Activated CD8-positive, alpha-beta memory T cell treated with anti-CD3 and anti-CD28 coated beads, Interleukin-2, amount 10 ng/mL, durations not matched to agents 7 days and 5 days (primary cell): ENCODE measurements at regions of chr10 and their contacts with region 1.

Region 1: DNA sequence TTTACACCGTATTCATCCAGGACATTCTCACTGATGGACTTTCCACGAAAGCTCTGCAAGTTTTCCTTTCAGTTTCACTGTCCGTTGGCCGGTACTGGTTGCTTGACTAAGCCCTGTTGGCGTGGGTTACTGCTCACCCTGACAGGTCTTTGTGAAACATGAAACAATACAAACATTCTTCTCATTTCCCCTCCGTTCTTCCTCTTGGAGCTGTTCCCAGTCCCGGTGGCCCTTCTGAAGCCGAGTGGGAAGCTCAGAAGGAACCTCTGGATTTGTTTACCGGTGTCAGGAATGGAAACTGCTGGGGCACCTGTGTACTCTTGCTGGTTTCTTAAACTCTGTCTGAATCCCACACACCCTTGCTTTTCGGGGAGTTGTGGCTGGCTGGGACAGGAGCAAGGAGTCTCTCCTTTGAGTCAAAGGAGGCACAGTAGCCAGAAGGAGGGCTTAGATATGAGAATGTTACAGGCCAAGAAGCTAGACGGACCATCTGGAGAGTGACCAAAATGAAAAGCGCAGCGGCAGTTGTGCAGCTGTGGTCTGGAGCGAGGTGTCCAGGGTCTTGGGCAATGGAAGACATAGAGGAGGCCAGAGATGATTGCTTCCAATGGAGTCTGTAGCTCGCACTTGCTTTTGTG is 45.7 kb downstream of the LYZL2 start:
- DNase-seq: peak; percentile 62
- ATAC-seq: peak; percentile 79
- H3K4me3 Mint-ChIP-seq: peak overlapping the region; percentile 53
- H3K27ac Mint-ChIP-seq: peak overlapping the region; percentile 55
- H3K4me1 Mint-ChIP-seq: peaks cover 18% of the 10 kb centered on the region
- H3K27me3 Mint-ChIP-seq: peaks cover 10% of the 10 kb centered on the region

Region 2: GRCh38 chr10:30392564-30392990 is 191.3 kb before region 1 on chr10:
- CTCF ChIA-PET with region 1: interaction called, 56 read pairs
- DNase-seq: peak; percentile 84
- ATAC-seq: peak; percentile 100
- H3K4me3 Mint-ChIP-seq: peak overlapping the region; percentile 46
- H3K27ac Mint-ChIP-seq: no peak overlapping the region
- H3K4me1 Mint-ChIP-seq: peaks cover 10% of the 10 kb centered on the region
- H3K27me3 Mint-ChIP-seq: peaks cover 30% of the 10 kb centered on the region

Region 3: DNA sequence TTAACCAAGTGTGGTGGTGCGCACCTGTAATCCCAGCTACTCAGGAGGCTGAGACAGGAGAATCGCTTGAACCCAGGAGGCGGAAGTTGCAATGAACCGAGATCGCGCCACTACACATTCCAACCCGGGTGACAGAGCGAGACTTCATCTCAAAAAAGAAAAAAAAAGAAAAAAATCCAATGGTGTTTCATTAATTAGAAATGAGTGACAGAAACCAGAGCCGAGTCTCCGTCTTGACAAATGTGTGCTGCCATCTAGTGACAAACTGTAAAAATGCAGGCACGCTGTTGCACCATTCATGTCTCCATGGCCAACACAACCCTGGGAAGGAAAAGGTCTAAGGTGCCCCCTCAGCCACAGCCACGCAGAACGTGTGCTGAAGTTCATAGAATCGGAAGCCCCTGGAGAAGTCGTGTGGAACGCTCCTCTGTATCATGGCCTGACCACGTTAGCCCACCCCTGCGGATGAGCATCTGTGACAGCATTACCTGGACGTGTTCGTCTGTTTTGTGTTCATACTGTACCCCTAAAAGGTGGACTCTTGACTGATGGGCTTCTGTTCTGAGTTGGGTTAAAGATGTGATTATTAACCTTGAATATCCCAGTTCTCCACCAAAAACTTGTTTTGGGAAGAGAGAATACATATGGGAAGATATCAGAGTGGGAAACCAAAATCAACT is 49.3 kb before region 1 on chr10:
- CTCF ChIA-PET with region 1: interaction called, 11 read pairs
- DNase-seq: peak; percentile 86
- ATAC-seq: peak; percentile 47
- H3K4me3 Mint-ChIP-seq: no peak overlapping the region
- H3K27ac Mint-ChIP-seq: no peak overlapping the region
- H3K4me1 Mint-ChIP-seq: peaks cover 52% of the 10 kb centered on the region
- H3K27me3 Mint-ChIP-seq: no peaks in the 10 kb centered on the region

Region 4: GRCh38 chr10:30546511-30546910 is 37.4 kb before region 1 on chr10:
- CTCF ChIA-PET with region 1: interaction called, 11 read pairs
- DNase-seq: no peak
- ATAC-seq: no peak
- H3K4me3 Mint-ChIP-seq: no peak overlapping the region
- H3K27ac Mint-ChIP-seq: no peak overlapping the region
- H3K4me1 Mint-ChIP-seq: peaks cover 17% of the 10 kb centered on the region
- H3K27me3 Mint-ChIP-seq: peaks cover 6% of the 10 kb centered on the region

Region 5: GRCh38 chr10:30562787-30563186 is 21.1 kb before region 1 on chr10:
- CTCF ChIA-PET with region 1: interaction called, 26 read pairs
- DNase-seq: peak; percentile 86
- ATAC-seq: peak; percentile 95
- H3K4me3 Mint-ChIP-seq: no peak overlapping the region
- H3K27ac Mint-ChIP-seq: no peak overlapping the region
- H3K4me1 Mint-ChIP-seq: peaks cover 13% of the 10 kb centered on the region
- H3K27me3 Mint-ChIP-seq: peaks cover 33% of the 10 kb centered on the region

Region 6: DNA sequence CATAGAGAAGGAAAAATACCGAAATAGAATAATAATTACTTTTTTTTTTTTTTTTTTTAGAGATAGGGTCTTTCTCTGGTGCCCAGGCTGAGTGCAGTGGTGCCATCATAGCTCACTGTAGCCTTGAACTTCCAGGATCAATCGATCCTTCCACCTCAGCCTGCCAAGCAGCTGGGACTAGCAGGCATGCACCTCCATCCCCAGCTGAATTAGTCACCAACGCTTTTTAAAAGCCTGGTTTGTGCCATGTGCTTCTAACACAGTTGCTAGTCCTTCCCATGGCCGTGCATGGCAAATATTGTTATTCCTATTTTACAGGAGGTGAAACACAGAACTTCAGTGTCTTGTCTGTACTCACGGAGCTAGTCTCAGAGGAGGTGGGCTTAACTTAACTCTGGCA is 22.4 kb after region 1 on chr10:
- CTCF ChIA-PET with region 1: interaction called, 26 read pairs
- DNase-seq: peak; percentile 12
- ATAC-seq: no peak
- H3K4me3 Mint-ChIP-seq: no peak overlapping the region
- H3K27ac Mint-ChIP-seq: no peak overlapping the region
- H3K4me1 Mint-ChIP-seq: peaks cover 6% of the 10 kb centered on the region
- H3K27me3 Mint-ChIP-seq: peaks cover 33% of the 10 kb centered on the region

Region 7: GRCh38 chr10:30645340-30645827 is 61.5 kb after region 1 on chr10:
- CTCF ChIA-PET with region 1: no interaction called
- DNase-seq: peak; percentile 41
- ATAC-seq: peak; percentile 60
- H3K4me3 Mint-ChIP-seq: no peak overlapping the region
- H3K27ac Mint-ChIP-seq: no peak overlapping the region
- H3K4me1 Mint-ChIP-seq: peaks cover 30% of the 10 kb centered on the region
- H3K27me3 Mint-ChIP-seq: peaks cover 60% of the 10 kb centered on the region